HCT116 (cell line): ENCODE measurements at regions of chr11 and their contacts with region 1.

Region 1: GRCh38 chr11:27158722-27159679 is 118.4 kb downstream of the BBOX1 start:
- DNase-seq: peak; percentile 58
- ATAC-seq: peak; percentile 87
- H3K4me3 ChIP-seq: no peak overlapping the region
- H3K27ac ChIP-seq: no peak overlapping the region
- H3K4me1 ChIP-seq: no peaks in the 10 kb centered on the region
- H3K27me3 ChIP-seq: no peaks in the 10 kb centered on the region
- CTCF ChIP-seq: peak; percentile 50 to 77 (median 61); a peak in 5 of 6 replicates
- POLR2A ChIP-seq: no peak
- RAD21 ChIP-seq: peak; percentile 79

Region 2: DNA sequence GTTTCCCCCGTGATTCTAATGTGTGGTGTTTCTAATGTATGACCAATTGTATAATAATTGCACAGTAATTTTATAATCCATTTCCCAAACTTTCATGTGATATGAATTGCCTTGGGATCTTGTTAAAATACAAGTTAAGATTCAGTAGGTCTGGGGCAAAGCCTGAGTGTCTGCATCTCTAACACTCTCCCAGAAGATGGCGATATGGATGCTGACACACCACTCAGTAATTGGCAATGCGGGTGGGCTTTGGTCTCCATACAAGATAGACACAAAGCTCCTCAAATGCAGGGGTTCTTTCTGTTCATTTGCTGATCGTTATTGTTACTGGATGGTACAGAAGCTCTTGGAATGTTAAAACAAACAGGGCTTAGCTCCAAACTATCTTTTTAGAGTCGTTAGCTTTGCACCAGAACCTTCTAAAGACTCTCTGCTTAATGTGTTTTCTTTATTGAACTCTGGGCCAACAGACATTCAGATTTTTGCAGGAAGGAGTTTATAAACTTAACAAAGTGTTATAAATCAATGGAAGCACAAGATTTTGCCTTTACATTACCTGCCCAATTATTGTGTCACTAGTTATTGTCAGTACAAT is 872.4 kb before region 1 on chr11:
- CTCF ChIA-PET with region 1: interaction called, 7 read pairs
- POLR2A ChIA-PET with region 1: no interaction called
- RAD21 ChIA-PET with region 1: no interaction called
- intact Hi-C with region 1: loop called (anchors 1 kb)
- DNase-seq: no peak
- ATAC-seq: no peak
- H3K4me3 ChIP-seq: no peak overlapping the region
- H3K27ac ChIP-seq: no peak overlapping the region
- H3K4me1 ChIP-seq: no peaks in the 10 kb centered on the region
- H3K27me3 ChIP-seq: no peaks in the 10 kb centered on the region
- CTCF ChIP-seq: peak; percentile 3 to 38 (median 28); a peak in 3 of 6 replicates
- POLR2A ChIP-seq: no peak
- RAD21 ChIP-seq: no peak

Region 3: GRCh38 chr11:26522912-26523610 is 635.9 kb before region 1 on chr11:
- CTCF ChIA-PET with region 1: no interaction called
- POLR2A ChIA-PET with region 1: no interaction called
- RAD21 ChIA-PET with region 1: no interaction called
- intact Hi-C with region 1: loop called (anchors 5 kb)
- DNase-seq: no peak
- ATAC-seq: no peak
- H3K4me3 ChIP-seq: no peak overlapping the region
- H3K27ac ChIP-seq: no peak overlapping the region
- H3K4me1 ChIP-seq: no peaks in the 10 kb centered on the region
- H3K27me3 ChIP-seq: no peaks in the 10 kb centered on the region
- CTCF ChIP-seq: no peak
- POLR2A ChIP-seq: no peak
- RAD21 ChIP-seq: no peak

Region 4: GRCh38 chr11:26753723-26754504 is 405.1 kb before region 1 on chr11:
- CTCF ChIA-PET with region 1: no interaction called
- POLR2A ChIA-PET with region 1: no interaction called
- RAD21 ChIA-PET with region 1: no interaction called
- intact Hi-C with region 1: loop called (anchors 1 kb)
- DNase-seq: peak; percentile 2
- ATAC-seq: peak; percentile 49; the same call in 1 of the 2 replicates
- H3K4me3 ChIP-seq: no peak overlapping the region
- H3K27ac ChIP-seq: no peak overlapping the region
- H3K4me1 ChIP-seq: no peaks in the 10 kb centered on the region
- H3K27me3 ChIP-seq: no peaks in the 10 kb centered on the region
- CTCF ChIP-seq: peak; percentile 8 to 47 (median 23); a peak in 2 of 6 replicates
- POLR2A ChIP-seq: no peak
- RAD21 ChIP-seq: peak; percentile 28; the same call in 1 of the 2 replicates

Region 5: GRCh38 chr11:27209562-27210005 is 50.6 kb after region 1 on chr11:
- CTCF ChIA-PET with region 1: no interaction called
- POLR2A ChIA-PET with region 1: no interaction called
- RAD21 ChIA-PET with region 1: no interaction called
- intact Hi-C with region 1: no loop called
- DNase-seq: peak; percentile 40
- ATAC-seq: peak; percentile 76
- H3K4me3 ChIP-seq: no peak overlapping the region
- H3K27ac ChIP-seq: no peak overlapping the region
- H3K4me1 ChIP-seq: peaks cover 10 to 17% of the 10 kb centered on the region in 2 experiments
- H3K27me3 ChIP-seq: no peaks in the 10 kb centered on the region
- CTCF ChIP-seq: no peak
- POLR2A ChIP-seq: no peak
- RAD21 ChIP-seq: no peak